PC-9 (cell line): ENCODE measurements at regions of chr5 and their contacts with region 1.

Region 1: DNA sequence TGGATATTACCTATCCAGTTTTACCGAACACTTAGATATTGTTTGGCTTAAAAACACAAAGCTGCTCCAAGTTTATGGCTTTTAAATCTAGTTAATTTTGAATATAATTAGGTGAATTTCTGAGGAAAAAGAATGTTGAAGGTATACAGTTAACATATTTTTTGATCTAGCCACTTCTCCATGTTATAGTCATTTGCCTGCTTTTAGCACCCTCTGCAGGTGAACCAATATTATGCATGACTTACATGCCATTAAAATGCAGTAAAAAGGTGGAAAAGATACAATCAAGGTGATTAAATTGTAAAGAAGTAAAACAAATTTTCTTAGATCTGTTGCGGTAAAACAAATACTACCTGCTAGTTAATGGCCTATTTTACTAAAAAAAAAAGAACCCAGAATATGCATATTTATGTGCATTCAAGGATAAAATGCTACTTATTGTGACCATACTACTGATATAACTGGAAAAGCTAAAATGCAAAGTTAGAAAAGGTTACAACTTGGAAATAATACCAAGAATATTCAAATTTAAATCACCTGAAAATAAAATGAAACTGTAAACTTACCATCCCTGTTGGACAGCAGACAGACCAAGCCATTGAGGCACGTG is 132.1 kb downstream of the AP3B1 start:
- DNase-seq: no peak
- H3K4me3 ChIP-seq: no peak overlapping the region
- H3K27ac ChIP-seq: no peak overlapping the region
- H3K4me1 ChIP-seq: no peaks in the 10 kb centered on the region
- H3K27me3 ChIP-seq: no peaks in the 10 kb centered on the region
- CTCF ChIP-seq: peak; percentile 64

Region 2: DNA sequence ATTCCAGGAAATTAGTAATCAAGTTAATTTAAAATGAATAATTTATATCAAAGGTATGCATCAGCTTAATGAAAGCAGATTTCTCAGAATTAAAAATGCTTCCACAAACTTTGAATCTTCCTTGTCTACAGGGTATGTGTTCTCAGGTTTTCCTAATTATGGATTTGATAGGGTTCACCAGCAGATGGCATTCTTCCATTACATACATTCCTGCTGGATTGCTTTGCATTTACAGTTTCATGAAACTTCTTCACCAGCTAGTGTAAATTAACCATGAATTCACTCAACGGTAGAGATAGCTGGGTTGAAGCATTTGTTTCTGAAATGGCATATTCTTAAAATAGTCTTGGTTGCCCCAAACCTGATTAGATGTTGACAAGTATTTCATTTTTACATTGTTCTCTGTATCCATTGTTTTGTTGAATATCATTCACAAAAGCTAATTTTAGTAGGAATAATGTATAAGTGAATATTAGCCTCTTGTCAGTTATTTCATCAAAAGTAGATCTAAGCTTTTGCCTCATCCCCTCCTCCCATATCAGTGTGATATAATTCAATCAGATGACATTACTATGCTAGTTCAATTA is 601.6 kb before region 1 on chr5:
- CTCF ChIA-PET with region 1: no interaction called
- POLR2A ChIA-PET with region 1: no interaction called
- intact Hi-C with region 1: loop called (anchors 2 kb)
- DNase-seq: peak in 1 of 2 experiments; percentile 40
- H3K4me3 ChIP-seq: no peak overlapping the region
- H3K27ac ChIP-seq: no peak overlapping the region
- H3K4me1 ChIP-seq: no peaks in the 10 kb centered on the region
- H3K27me3 ChIP-seq: no peaks in the 10 kb centered on the region
- CTCF ChIP-seq: peak; percentile 71